CD4-positive, alpha-beta memory T cell (primary cell): ENCODE measurements at regions of chr7 and their contacts with region 1.

Region 1: DNA sequence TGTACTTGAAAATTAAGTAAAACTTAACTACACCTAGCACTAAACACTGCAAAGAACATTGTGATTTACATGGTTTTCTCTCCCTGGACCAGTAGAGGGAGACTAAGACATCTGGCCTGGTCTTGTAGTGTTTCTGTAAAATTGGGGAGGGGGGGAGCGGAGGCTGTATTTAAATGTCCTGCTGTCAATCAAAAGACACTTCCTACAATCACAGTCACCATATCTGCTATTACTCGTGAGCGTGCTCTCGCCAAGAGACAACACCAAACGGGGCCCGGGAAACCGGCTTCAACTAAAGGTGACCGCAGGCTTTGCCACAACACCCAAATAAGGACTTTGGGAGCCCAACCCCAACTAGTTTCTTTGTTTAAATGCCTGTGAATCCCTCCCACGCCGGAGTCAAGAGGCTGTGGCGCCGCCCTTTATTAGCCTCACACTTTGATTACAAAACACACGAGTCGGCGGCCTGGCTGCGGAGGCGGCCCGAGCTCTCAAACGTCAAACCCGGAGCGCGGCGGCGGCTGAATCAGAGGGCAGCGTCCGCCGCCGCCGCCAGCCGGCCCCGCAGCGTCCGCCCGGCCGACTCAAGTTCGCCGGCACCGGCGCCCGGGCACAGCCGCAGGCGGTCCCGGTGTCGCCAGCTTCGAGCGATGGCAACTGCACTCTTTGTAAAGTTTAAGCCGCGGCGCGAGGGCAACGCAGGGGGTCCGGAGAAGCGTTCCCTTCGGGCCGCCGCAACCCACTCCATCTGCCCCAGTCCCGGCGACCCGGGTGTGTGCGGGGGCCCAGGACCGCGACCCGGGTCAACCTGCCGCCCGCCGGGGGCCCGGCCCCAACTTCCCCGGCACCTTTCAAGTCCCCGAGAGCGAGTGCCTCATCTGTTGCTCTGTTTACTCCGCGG is 1.3 kb downstream of the KDM7A start:
- DNase-seq: peak; percentile 91 to 98 (median 95)
- H3K4me3 ChIP-seq: peak overlapping the region in 1 of 2 donors; percentile 60
- H3K4me3 Mint-ChIP-seq: peak overlapping the region; percentile 82 to 92 (median 90)
- H3K27ac ChIP-seq: peak overlapping the region; percentile 85
- H3K27ac Mint-ChIP-seq: peak overlapping the region; percentile 82 to 98 (median 94)
- H3K4me1 ChIP-seq: peaks cover 41% of the 10 kb centered on the region
- H3K4me1 Mint-ChIP-seq: peaks cover 29 to 56% (median 45%) of the 10 kb centered on the region in 4 donors
- H3K27me3 ChIP-seq: no peaks in the 10 kb centered on the region
- H3K27me3 Mint-ChIP-seq: no peaks in the 10 kb centered on the region

Region 2: GRCh38 chr7:139340037-139340807 is 835.2 kb before region 1 on chr7:
- CTCF ChIA-PET with region 1: no interaction called
- POLR2A ChIA-PET with region 1: no interaction called
- intact Hi-C with region 1: loop called (anchors 1 kb)
- DNase-seq: peak; percentile 97 to 100 (median 98)
- H3K4me3 ChIP-seq: peak overlapping the region; percentile 95 to 96
- H3K4me3 Mint-ChIP-seq: peak overlapping the region; percentile 95 to 99 (median 98)
- H3K27ac ChIP-seq: peak overlapping the region; percentile 100
- H3K27ac Mint-ChIP-seq: peak overlapping the region; percentile 100
- H3K4me1 ChIP-seq: peaks cover 20% of the 10 kb centered on the region
- H3K4me1 Mint-ChIP-seq: peaks cover 17 to 45% (median 27%) of the 10 kb centered on the region in 4 donors
- H3K27me3 ChIP-seq: no peaks in the 10 kb centered on the region
- H3K27me3 Mint-ChIP-seq: peaks cover 3 to 6% of the 10 kb centered on the region in 2 donors

Region 3: GRCh38 chr7:140192620-140193019 is 17.1 kb after region 1 on chr7:
- CTCF ChIA-PET with region 1: interaction called, 3 read pairs
- POLR2A ChIA-PET with region 1: interaction called, 25 read pairs
- intact Hi-C with region 1: no loop called
- DNase-seq: no peak
- H3K4me3 ChIP-seq: no peak overlapping the region
- H3K4me3 Mint-ChIP-seq: no peak overlapping the region
- H3K27ac ChIP-seq: no peak overlapping the region
- H3K27ac Mint-ChIP-seq: peak overlapping the region in 1 of 7 donors; percentile 7
- H3K4me1 ChIP-seq: no peaks in the 10 kb centered on the region
- H3K4me1 Mint-ChIP-seq: peaks cover 3 to 17% (median 5%) of the 10 kb centered on the region in 4 donors
- H3K27me3 ChIP-seq: no peaks in the 10 kb centered on the region
- H3K27me3 Mint-ChIP-seq: no peaks in the 10 kb centered on the region

Region 4: GRCh38 chr7:140242057-140243031 is 66.9 kb after region 1 on chr7:
- CTCF ChIA-PET with region 1: interaction called, 4 read pairs
- POLR2A ChIA-PET with region 1: interaction called, 11 read pairs
- intact Hi-C with region 1: no loop called
- DNase-seq: no peak
- H3K4me3 ChIP-seq: no peak overlapping the region
- H3K4me3 Mint-ChIP-seq: no peak overlapping the region
- H3K27ac ChIP-seq: no peak overlapping the region
- H3K27ac Mint-ChIP-seq: peak overlapping the region in 3 of 7 donors; percentile 41 to 42 (median 42)
- H3K4me1 ChIP-seq: peaks cover 9% of the 10 kb centered on the region
- H3K4me1 Mint-ChIP-seq: peaks cover 4 to 11% (median 6%) of the 10 kb centered on the region in 4 donors
- H3K27me3 ChIP-seq: no peaks in the 10 kb centered on the region
- H3K27me3 Mint-ChIP-seq: peaks cover 0 to 1% of the 10 kb centered on the region in 2 donors

Region 5: DNA sequence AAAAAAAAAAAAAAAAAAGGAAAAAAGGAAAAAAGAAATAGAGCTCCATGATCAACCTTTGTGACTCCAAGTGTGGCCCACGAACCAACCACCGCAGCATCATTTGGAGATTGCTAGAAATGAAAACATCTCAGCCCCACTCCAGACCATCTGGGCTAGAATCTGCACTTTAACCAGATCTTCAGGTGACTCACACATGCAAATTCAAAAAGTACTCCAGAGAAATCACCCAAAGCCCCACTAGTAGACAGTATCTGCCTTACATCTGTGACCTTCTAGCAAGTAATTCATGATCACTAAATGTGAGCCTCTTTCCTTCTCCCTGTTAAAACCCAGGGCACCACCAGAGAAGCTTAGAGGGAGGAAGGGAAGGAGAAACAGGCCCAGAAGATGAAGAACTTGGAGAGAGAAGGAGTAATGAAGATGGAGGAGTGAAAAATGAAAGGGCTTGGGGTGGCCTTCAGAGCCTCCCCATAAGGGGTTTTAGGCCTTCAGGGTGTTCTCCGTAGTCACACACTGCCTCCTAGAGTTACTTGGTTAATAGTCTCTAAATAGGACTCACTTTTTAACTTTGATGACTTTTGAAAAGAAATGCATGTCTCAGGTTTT is 128.8 kb after region 1 on chr7:
- CTCF ChIA-PET with region 1: interaction called, 7 read pairs
- POLR2A ChIA-PET with region 1: interaction called, 23 read pairs
- intact Hi-C with region 1: loop called (anchors 1 kb)
- DNase-seq: peak; percentile 39 to 67 (median 56)
- H3K4me3 ChIP-seq: no peak overlapping the region
- H3K4me3 Mint-ChIP-seq: no peak overlapping the region
- H3K27ac ChIP-seq: no peak overlapping the region
- H3K27ac Mint-ChIP-seq: peak overlapping the region in 5 of 7 donors; percentile 35 to 72 (median 63)
- H3K4me1 ChIP-seq: no peaks in the 10 kb centered on the region
- H3K4me1 Mint-ChIP-seq: peaks cover 4 to 7% (median 5%) of the 10 kb centered on the region in 4 donors
- H3K27me3 ChIP-seq: no peaks in the 10 kb centered on the region
- H3K27me3 Mint-ChIP-seq: peaks cover under 1% of the 10 kb centered on the region in 2 donors

Region 6: DNA sequence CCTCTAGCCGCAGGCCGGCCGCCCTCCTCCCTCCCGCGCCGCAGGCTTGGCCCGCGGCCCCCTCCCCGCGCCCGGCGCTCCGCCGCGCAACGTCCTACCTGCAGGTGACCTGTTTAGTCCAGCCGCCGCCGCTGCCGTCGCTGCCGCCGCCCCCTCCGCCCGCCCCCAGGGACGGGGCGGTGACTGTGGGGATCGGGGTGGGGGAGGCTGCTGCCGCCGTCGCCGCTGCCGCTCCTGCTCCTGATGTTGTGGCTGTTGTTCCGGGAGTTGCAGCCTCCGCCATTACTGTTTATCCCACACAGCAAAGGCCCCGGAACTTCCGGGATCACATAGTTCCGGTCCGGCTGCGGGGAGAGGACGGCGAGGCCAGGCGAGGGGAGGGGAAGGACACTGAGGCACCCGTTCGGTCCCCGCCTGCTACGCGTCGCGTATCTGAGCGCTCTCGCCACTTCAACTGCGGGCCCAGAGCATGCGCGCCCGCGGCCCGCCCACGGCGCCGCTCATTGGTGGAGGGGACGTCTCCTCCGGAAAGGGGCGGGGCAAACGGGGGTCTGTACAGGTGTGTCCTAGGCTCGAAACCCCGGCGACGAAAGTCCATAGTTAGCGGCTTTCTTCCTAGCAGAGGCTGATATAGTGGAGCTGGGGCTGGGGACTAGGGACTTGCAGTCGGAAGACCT is 303.7 kb after region 1 on chr7 and contains the start of gene MKRN1:
- CTCF ChIA-PET with region 1: interaction called, 4 read pairs
- POLR2A ChIA-PET with region 1: interaction called, 12 read pairs
- intact Hi-C with region 1: loop called (anchors 1 kb)
- DNase-seq: peak; percentile 90 to 93 (median 90)
- H3K4me3 ChIP-seq: peak within 1 kb of the TSS; percentile 59 to 71
- H3K4me3 Mint-ChIP-seq: peak within 1 kb of the TSS; percentile 95 to 100 (median 99)
- H3K27ac ChIP-seq: peak within 1 kb of the TSS; percentile 75
- H3K27ac Mint-ChIP-seq: peak within 1 kb of the TSS; percentile 95 to 99 (median 98)
- H3K4me1 ChIP-seq: peaks cover 25% of the 10 kb centered on the region
- H3K4me1 Mint-ChIP-seq: peaks cover 16 to 40% (median 25%) of the 10 kb centered on the region in 4 donors
- H3K27me3 ChIP-seq: no peaks in the 10 kb centered on the region
- H3K27me3 Mint-ChIP-seq: no peaks in the 10 kb centered on the region
- total RNA-seq, gene MKRN1: 140 to 156 TPM

Region 7: DNA sequence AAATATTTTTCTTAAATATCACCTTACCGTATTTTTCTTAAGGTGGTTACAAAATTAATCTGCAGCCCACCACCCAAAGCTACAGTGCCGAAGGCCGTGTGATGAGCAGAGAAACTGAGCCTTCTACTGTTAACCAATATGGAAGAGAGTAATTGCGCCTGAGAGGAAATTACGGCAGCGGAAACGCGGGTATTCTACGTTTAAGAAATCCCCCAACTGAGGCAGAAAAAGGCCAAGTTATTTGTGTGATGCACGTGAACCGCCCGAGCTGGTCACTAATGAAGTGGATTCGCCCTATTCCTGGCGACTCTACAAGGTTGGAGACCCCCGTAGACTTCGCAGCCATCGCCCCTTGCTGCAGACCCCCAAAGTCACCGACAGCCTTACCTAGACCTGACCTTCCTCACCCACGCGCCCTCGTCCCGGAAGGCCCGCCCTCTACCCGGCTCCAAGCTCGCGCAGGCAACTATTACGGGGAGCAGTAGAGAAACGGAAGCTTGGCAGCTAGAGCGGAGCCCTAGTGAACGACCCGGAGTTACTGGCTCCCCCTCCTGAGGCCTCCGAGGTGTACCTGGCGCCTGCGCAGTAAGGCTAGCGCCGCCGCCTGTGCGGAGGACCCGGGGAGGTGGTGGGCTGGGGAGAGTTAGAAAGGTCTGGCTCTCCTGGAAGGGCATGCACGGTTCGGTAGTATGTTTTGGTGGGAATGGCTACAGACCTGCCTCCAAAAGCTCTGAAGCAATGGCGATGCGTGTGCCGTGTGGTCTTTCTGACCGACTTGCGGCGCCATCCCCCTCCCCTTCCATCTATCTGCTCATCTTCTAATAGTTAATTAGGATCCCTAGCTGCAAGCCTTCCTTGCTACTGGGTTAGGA is 839.3 kb after region 1 on chr7 and contains the start of gene MRPS33:
- CTCF ChIA-PET with region 1: no interaction called
- POLR2A ChIA-PET with region 1: interaction called, 7 read pairs
- intact Hi-C with region 1: loop called (anchors 2 kb)
- DNase-seq: peak; percentile 95 to 97 (median 96)
- H3K4me3 ChIP-seq: peak within 1 kb of the TSS; percentile 61 to 85
- H3K4me3 Mint-ChIP-seq: peak within 1 kb of the TSS; percentile 95 to 100 (median 98)
- H3K27ac ChIP-seq: peak within 1 kb of the TSS; percentile 96
- H3K27ac Mint-ChIP-seq: peak within 1 kb of the TSS; percentile 99 to 100 (median 100)
- H3K4me1 ChIP-seq: peaks cover 24% of the 10 kb centered on the region
- H3K4me1 Mint-ChIP-seq: peaks cover 19 to 42% (median 34%) of the 10 kb centered on the region in 4 donors
- H3K27me3 ChIP-seq: no peaks in the 10 kb centered on the region
- H3K27me3 Mint-ChIP-seq: peaks cover 5 to 7% of the 10 kb centered on the region in 2 donors
- total RNA-seq, gene MRPS33: 46.7 to 48.0 TPM